Activated naive CD4-positive, alpha-beta T cell treated with anti-CD3 and anti-CD28 coated beads for 36 hours (primary cell): ENCODE measurements at regions of chr7 and their contacts with region 1.

Region 1: DNA sequence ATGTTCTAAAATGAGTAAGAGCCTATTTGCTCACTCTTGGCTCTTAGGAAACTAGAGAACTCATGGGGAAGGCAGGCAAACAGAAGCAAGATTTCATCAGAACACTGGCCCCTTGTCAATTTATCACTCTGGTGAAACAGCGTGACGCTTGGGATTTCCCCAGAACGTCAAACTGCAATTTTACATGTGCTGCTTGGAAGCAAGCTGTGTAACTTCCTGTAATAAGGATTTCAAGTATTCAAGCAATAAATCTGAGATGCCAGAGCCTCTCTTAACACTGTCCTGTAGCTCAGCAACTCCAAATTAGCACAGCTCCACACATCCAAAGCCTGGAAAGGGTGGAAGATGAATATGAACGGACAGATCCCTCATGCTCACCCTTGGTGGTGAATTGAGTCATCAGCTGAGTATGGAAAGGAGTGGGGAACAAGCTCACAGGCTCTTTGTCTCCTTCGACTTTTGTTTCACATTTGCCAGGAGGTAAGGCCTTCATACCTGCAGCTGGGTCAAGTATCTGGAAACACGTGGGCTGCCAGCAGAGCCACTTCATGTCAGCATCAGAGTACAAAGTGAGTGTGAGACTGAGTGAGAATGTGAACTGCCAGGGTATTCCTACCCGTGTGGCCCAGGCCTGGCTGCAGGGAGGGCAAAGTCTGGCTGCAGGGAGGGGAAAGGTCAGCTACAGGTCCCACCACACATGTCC is 140.4 kb upstream of the NAMPT start:
- DNase-seq: peak; percentile 96
- H3K4me3 Mint-ChIP-seq: peak overlapping the region; percentile 80
- H3K27ac Mint-ChIP-seq: peak overlapping the region; percentile 99
- H3K4me1 Mint-ChIP-seq: peaks cover 86% of the 10 kb centered on the region
- H3K27me3 Mint-ChIP-seq: peaks cover 3% of the 10 kb centered on the region

Region 2: DNA sequence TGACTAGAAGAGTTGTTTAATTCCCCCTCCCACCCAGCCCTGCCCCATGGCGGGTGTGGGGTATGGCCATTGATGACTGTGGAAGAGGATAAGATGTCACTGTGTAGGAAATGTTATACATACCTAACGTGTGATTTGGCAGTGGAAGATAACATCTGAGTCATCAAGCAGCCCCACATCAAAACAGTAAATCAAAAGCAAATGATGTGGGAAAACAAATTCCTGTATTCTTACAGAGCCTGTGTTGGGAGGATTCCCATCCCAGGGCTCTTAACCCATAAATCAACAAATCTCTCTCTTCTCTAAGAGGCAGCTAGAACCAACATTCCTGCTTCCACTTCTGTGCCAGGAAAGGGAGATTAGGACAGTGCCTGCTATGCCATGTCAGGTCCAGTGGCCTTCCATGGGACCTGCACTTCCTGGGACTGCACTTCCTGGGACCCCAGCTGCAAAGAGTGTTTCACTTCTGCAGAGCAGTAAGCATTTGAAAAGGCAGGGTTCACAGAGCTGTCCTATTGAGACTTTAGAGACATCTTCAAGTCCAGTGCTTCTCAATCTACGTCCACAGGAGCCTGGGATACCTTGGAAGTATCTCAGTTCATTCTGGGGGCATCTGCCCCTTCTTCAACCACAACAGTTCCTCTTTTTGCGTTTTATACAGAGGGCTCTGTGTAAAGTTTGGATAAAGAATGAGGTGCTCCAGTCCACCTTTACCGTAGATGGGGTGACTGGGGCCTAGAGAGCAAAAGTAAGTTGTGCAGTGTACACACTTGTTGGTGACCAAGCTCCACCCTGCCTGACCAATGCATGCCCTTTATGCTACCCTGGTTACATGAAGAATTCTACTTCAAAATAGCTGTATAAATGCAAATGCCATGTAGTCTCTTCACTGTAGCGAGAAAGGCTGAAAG is 594.5 kb before region 1 on chr7:
- CTCF ChIA-PET with region 1: no interaction called
- intact Hi-C with region 1: no loop called
- DNase-seq: no peak
- H3K4me3 Mint-ChIP-seq: no peak overlapping the region
- H3K27ac Mint-ChIP-seq: no peak overlapping the region
- H3K4me1 Mint-ChIP-seq: peaks cover 8% of the 10 kb centered on the region
- H3K27me3 Mint-ChIP-seq: no peaks in the 10 kb centered on the region

Region 3: DNA sequence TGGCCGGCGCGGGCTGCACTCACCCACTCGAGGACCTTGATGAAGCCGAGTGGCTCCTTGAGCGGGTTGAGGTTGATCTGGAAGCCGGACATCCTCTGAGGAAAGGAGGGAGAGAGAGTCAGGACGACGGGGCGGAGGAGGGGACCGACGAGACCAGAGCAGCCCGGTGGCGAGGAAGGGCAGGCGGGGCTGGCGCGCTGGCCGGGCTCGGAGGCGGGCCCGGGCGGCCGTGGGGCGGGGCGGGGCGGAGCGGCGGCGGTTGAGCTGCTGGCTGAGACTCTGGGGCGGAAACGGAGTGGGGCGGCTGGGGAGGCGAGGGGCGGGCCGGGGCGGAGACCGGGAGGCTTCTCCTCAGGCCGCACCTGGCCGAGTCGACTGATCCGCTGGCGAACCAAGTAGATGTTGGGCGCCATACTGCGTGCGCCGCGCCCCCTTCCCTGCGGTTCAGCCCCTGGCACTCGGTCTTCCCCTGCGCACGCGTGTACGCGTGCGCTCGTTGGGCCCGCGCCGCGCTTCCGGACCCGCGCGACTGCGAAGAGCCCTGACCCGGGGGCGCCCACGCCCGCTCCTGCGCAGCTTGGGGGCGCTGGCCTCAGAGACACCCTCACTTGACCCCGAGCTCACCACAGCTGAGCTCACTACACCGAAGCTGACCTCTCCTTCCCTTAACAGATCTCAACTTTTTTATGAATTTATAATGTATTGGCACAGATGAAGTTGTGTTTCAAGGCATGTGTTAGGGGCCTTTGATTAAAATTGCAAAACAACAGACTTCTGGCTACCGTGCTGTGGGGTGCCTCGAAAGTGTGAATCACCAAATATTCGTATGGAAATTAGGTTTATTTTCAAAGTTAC is 312.8 kb before region 1 on chr7 and contains the start of gene SYPL1:
- CTCF ChIA-PET with region 1: no interaction called
- intact Hi-C with region 1: loop called (anchors 5 kb)
- DNase-seq: peak; percentile 94
- H3K4me3 Mint-ChIP-seq: peak within 1 kb of the TSS; percentile 85
- H3K27ac Mint-ChIP-seq: peak within 1 kb of the TSS; percentile 92
- H3K4me1 Mint-ChIP-seq: peaks cover 71% of the 10 kb centered on the region
- H3K27me3 Mint-ChIP-seq: no peaks in the 10 kb centered on the region
- total RNA-seq, gene SYPL1: 24.7 to 26.6 TPM

Region 4: DNA sequence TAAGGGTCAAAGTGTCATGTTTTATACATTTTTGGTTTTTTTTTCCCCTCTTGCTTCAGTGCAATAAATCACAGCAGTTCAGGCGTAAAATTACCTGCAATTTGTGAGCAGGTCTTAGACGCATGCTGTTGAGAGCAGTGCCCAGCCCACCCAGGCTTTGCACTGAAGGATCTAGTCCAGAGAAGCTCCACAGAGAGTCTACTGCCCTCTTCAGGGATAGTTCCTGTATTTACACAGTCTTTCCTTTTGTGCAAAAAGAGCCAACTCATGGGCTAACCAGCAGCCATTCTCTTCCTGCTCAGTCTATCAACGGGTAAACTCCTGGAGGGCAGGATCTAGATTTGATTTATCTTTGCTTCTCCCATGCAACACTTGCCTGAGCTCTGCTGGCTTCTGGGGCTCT is 58.1 kb before region 1 on chr7:
- CTCF ChIA-PET with region 1: no interaction called
- intact Hi-C with region 1: loop called (anchors 1 kb)
- DNase-seq: no peak
- H3K4me3 Mint-ChIP-seq: no peak overlapping the region
- H3K27ac Mint-ChIP-seq: peak overlapping the region; percentile 70
- H3K4me1 Mint-ChIP-seq: peaks cover 44% of the 10 kb centered on the region
- H3K27me3 Mint-ChIP-seq: peaks cover 23% of the 10 kb centered on the region

Region 5: GRCh38 chr7:106448992-106449859 is 24.1 kb after region 1 on chr7:
- CTCF ChIA-PET with region 1: no interaction called
- intact Hi-C with region 1: loop called (anchors 1 kb)
- DNase-seq: no peak
- H3K4me3 Mint-ChIP-seq: no peak overlapping the region
- H3K27ac Mint-ChIP-seq: peak overlapping the region; percentile 83
- H3K4me1 Mint-ChIP-seq: peaks cover 24% of the 10 kb centered on the region
- H3K27me3 Mint-ChIP-seq: peaks cover 28% of the 10 kb centered on the region

Region 6: GRCh38 chr7:106485031-106485551 is 59.9 kb after region 1 on chr7:
- CTCF ChIA-PET with region 1: no interaction called
- intact Hi-C with region 1: loop called (anchors 1 kb)
- DNase-seq: peak; percentile 26
- H3K4me3 Mint-ChIP-seq: no peak overlapping the region
- H3K27ac Mint-ChIP-seq: peak overlapping the region; percentile 81
- H3K4me1 Mint-ChIP-seq: peaks cover 57% of the 10 kb centered on the region
- H3K27me3 Mint-ChIP-seq: peaks cover 23% of the 10 kb centered on the region

Region 7: GRCh38 chr7:107661081-107661864 is 1236.1 kb after region 1 on chr7:
- CTCF ChIA-PET with region 1: no interaction called
- intact Hi-C with region 1: loop called (anchors 10 kb)
- DNase-seq: peak; percentile 69
- H3K4me3 Mint-ChIP-seq: peak overlapping the region; percentile 86
- H3K27ac Mint-ChIP-seq: no peak overlapping the region
- H3K4me1 Mint-ChIP-seq: peaks cover 26% of the 10 kb centered on the region
- H3K27me3 Mint-ChIP-seq: peaks cover 31% of the 10 kb centered on the region